Panc1 (cell line): ENCODE measurements at regions of chrX and their contacts with region 1.

Region 1: DNA sequence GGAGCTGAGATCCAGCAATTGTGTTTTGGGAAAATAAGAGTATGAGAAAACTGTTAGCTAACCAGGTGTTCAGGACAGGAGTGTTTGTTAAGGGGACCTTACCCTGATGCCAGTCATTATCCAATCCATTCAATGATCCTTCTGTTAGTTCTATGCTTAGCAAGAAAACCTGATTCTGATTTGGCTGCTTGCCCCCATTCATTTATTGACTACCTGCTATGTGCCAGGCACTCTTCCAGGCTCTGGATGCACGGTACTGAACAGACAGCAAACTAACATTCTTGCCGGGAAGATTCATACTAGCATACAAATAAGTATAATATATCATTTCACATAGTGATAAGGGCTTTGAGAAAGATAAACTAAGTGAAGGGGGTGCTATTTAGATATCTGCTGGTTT is 1.0 kb upstream of the MECP2 start:
- DNase-seq: no peak
- ATAC-seq: no peak
- H3K4me3 ChIP-seq: peak overlapping the region; percentile 55 to 84
- H3K27ac ChIP-seq: peak overlapping the region; percentile 79
- H3K4me1 ChIP-seq: peaks cover 33% of the 10 kb centered on the region
- H3K27me3 ChIP-seq: peaks cover 5% of the 10 kb centered on the region; the same call in 1 of the 2 replicates
- CTCF ChIP-seq: no peak

Region 2: DNA sequence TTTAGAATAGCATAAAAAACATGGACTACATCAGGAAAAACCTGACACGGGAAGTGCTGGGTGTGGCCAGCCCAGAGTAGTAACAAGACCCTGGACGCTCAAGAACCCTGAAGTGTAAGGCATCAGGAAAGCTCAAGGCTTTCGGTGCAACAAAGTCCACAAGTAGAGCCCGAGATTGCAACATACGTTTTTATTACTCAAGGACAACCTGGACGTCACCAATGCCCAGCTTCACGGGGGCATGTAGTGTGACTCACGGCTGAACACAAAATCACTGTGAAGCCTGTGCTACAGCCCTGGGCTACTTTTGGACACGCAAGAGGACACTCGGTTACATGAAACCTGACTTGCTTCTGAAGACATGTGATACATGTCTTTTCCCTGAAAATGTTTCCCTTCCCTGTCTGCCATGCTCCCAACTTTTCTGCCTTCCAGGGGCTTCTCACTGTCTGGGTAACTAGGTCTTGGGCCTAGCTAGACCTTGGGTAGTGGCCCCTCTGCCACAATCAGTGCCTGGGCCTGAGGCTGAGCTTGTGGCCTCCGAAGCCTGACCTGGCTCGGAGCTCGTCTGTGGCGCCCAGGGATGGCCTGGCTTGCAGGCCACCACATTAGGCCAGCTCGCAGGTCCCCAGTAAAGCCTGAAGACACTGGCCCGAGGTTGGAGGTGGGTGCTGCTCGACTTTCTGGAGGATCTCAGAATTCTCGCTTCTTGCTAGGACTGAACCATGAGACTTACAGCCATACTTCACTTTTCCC is 88.0 kb before region 1 on chrX:
- CTCF ChIA-PET with region 1: no interaction called
- POLR2A ChIA-PET with region 1: interaction called, 18 read pairs
- in situ Hi-C with region 1: no loop called
- intact Hi-C with region 1: no loop called
- DNase-seq: no peak
- ATAC-seq: no peak
- H3K4me3 ChIP-seq: no peak overlapping the region
- H3K27ac ChIP-seq: no peak overlapping the region
- H3K4me1 ChIP-seq: peaks cover 14% of the 10 kb centered on the region; the same call in 1 of the 2 replicates
- H3K27me3 ChIP-seq: no peaks in the 10 kb centered on the region
- CTCF ChIP-seq: no peak